K562 (cell line): ENCODE measurements at regions of chr11 and their contacts with region 1.

Region 1: DNA sequence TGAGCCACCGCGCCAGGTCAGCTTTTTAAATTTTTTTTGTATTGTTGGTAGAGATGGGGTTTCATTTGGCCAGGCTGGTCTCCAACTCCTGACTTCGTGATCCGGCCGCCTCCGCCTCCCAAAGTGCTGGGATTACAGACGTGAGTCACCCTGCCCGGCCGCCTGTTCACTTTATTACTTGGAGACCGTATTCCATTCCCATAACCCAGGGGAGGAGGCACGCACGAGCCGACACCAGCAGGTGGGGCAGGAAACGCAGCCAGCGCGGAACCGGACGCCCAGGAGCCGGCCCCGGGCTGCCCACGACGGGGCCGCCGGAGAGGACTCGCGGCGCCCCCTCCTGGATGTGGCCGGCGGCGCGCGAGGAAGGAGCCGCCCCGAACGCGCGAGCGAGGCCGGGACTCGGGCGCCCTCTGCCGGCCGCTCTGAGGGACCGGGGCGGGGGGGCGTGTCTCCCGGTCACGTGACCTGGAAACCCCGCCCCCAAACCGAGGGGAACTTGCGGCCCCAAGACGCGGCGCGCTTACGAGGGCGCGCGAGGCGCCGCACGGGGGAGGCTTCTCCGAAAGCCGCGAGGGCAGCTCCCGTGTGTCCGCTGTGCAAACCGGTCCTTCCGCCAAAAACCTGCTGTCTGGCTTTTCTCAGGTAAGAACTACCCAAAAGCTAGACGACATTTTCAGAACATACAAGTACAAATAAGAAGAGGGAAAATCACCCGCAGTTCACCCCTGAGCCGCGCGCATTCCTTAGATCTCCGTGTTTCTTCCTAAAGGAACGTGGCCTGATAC is 11.6 kb upstream of the RNH1 start:
- DNase-seq: peak; percentile 92 to 95 (median 94)
- ATAC-seq: peak; percentile 99
- H3K4me3 ChIP-seq: peak overlapping the region; percentile 9; the same call in 1 of the 2 replicates
- H3K27ac ChIP-seq: peak overlapping the region; percentile 78
- H3K4me1 ChIP-seq: peaks cover 0 to 17% of the 10 kb centered on the region in 2 experiments; a peak in 3 of 5 replicates
- H3K27me3 ChIP-seq: no peaks in the 10 kb centered on the region
- CTCF ChIP-seq: peak; percentile 91 to 99 (median 99)
- EP300 ChIP-seq: no peak
- POLR2A ChIP-seq: peak; percentile 63; the same call in 1 of the 2 replicates
- RAD21 ChIP-seq: peak; percentile 96 to 99

Region 2: GRCh38 chr11:199782-200181 is 318.9 kb before region 1 on chr11:
- CTCF ChIA-PET with region 1: no interaction called
- POLR2A ChIA-PET with region 1: interaction called, 3 read pairs
- in situ Hi-C with region 1: loop called (anchors 5 kb)
- intact Hi-C with region 1: no loop called
- DNase-seq: peak in 1 of 4 experiments; percentile 18
- ATAC-seq: no peak
- H3K4me3 ChIP-seq: no peak overlapping the region
- H3K27ac ChIP-seq: no peak overlapping the region
- H3K4me1 ChIP-seq: peaks cover 13 to 37% of the 10 kb centered on the region in 2 experiments; a peak in 4 of 5 replicates
- H3K27me3 ChIP-seq: no peaks in the 10 kb centered on the region
- CTCF ChIP-seq: no peak
- EP300 ChIP-seq: no peak
- POLR2A ChIP-seq: no peak
- RAD21 ChIP-seq: no peak

Region 3: DNA sequence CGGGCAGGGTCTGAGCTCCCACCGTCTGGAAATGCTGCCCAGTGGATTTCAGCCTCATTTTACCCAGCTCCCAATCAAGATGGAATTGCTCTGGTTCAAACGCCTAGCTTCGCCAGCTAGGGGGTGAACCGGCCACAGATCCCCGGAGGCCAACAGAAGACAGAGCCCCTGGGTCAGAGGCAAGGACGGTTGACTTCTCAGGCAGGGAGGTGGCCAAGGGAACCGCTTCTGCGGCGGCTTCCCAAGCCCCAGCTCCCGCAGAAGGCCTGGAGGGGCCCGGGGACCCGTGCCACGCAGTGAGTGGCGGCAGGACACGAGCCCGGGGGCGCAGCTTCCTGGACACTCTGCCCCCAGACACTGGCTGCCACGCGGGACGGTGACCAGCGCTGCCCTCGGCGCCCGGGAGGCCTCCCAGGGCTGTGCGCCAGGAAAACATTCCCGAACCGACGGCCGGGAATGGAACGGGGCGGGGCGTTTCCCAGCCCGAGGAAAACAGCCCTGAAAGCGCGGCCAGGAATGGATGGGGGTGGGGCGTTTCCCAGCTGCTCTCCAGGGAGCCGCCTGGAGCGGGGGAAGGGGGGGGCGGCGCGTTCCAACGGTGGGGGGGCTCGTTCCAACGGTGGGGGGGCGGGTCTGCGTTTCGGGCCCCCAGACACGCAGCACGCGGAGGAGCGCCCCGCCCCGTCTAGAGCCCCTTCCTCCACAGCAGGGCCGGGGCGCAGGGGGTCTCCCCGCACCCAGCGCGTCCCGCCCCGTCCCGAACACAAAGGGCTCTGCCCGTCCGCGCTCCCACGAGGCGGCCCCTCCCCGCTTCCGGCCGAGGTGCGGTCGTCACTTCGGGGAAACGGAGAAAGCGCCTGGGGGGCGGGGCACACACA is 162.8 kb before region 1 on chr11:
- CTCF ChIA-PET with region 1: no interaction called
- POLR2A ChIA-PET with region 1: no interaction called
- in situ Hi-C with region 1: no loop called
- intact Hi-C with region 1: no loop called
- DNase-seq: peak; percentile 87 to 90 (median 90)
- ATAC-seq: peak; percentile 67
- H3K4me3 ChIP-seq: peak overlapping the region; percentile 35
- H3K27ac ChIP-seq: peak overlapping the region; percentile 98
- H3K4me1 ChIP-seq: peaks cover 40 to 64% of the 10 kb centered on the region in 2 experiments
- H3K27me3 ChIP-seq: no peaks in the 10 kb centered on the region; a peak in 1 of 5 replicates
- CTCF ChIP-seq: no peak
- EP300 ChIP-seq: no peak
- POLR2A ChIP-seq: peak; percentile 58; the same call in 1 of the 2 replicates
- RAD21 ChIP-seq: no peak

Region 4: GRCh38 chr11:420054-420910 is 98.4 kb before region 1 on chr11:
- CTCF ChIA-PET with region 1: no interaction called
- POLR2A ChIA-PET with region 1: no interaction called
- in situ Hi-C with region 1: no loop called
- intact Hi-C with region 1: no loop called
- DNase-seq: no peak
- ATAC-seq: no peak
- H3K4me3 ChIP-seq: no peak overlapping the region
- H3K27ac ChIP-seq: no peak overlapping the region
- H3K4me1 ChIP-seq: peaks cover 7 to 57% of the 10 kb centered on the region in 2 experiments
- H3K27me3 ChIP-seq: no peaks in the 10 kb centered on the region
- CTCF ChIP-seq: no peak
- EP300 ChIP-seq: no peak
- POLR2A ChIP-seq: no peak
- RAD21 ChIP-seq: no peak

Region 5: GRCh38 chr11:441418-442274 is 77.0 kb before region 1 on chr11 and contains the start of gene ANO9:
- CTCF ChIA-PET with region 1: interaction called, 25 read pairs
- POLR2A ChIA-PET with region 1: interaction called, 3 read pairs
- in situ Hi-C with region 1: no loop called
- intact Hi-C with region 1: loop called (anchors 5 kb)
- DNase-seq: peak; percentile 73 to 81 (median 78)
- ATAC-seq: peak; percentile 84
- H3K4me3 ChIP-seq: peak within 1 kb of the TSS; percentile 41
- H3K27ac ChIP-seq: peak within 1 kb of the TSS; percentile 50; the same call in 1 of the 3 replicates
- H3K4me1 ChIP-seq: peaks cover 15 to 72% of the 10 kb centered on the region in 2 experiments; a peak in 4 of 5 replicates
- H3K27me3 ChIP-seq: no peaks in the 10 kb centered on the region
- CTCF ChIP-seq: no peak
- EP300 ChIP-seq: no peak
- POLR2A ChIP-seq: no peak; the same call in 1 of the 2 replicates
- RAD21 ChIP-seq: no peak
- polyA plus RNA-seq, gene ANO9: 0.20 to 0.27 TPM

Region 6: GRCh38 chr11:876519-876918 is 357.9 kb after region 1 on chr11:
- CTCF ChIA-PET with region 1: no interaction called
- POLR2A ChIA-PET with region 1: no interaction called
- in situ Hi-C with region 1: no loop called
- intact Hi-C with region 1: no loop called
- DNase-seq: no peak
- ATAC-seq: peak; percentile 8
- H3K4me3 ChIP-seq: no peak overlapping the region
- H3K27ac ChIP-seq: no peak overlapping the region; the same call in 2 of the 3 replicates
- H3K4me1 ChIP-seq: peaks cover 29 to 64% of the 10 kb centered on the region in 2 experiments; a peak in 4 of 5 replicates
- H3K27me3 ChIP-seq: no peaks in the 10 kb centered on the region
- CTCF ChIP-seq: no peak
- EP300 ChIP-seq: no peak
- POLR2A ChIP-seq: no peak
- RAD21 ChIP-seq: no peak